Transverse colon (tissue), 4 donors: ENCODE measurements at regions of chr7 and their contacts with region 1.

Region 1: GRCh38 chr7:93690021-93690420 is 115.5 kb upstream of the CALCR start:
- DNase-seq: no peak
- H3K4me3 ChIP-seq: no peak overlapping the region
- H3K27ac ChIP-seq: no peak overlapping the region
- H3K4me1 ChIP-seq: no peaks in the 10 kb centered on the region
- H3K27me3 ChIP-seq: no peaks in the 10 kb centered on the region
- CTCF ChIP-seq: no peak
- EP300 ChIP-seq: no peak
- POLR2A ChIP-seq: no peak

Region 2: DNA sequence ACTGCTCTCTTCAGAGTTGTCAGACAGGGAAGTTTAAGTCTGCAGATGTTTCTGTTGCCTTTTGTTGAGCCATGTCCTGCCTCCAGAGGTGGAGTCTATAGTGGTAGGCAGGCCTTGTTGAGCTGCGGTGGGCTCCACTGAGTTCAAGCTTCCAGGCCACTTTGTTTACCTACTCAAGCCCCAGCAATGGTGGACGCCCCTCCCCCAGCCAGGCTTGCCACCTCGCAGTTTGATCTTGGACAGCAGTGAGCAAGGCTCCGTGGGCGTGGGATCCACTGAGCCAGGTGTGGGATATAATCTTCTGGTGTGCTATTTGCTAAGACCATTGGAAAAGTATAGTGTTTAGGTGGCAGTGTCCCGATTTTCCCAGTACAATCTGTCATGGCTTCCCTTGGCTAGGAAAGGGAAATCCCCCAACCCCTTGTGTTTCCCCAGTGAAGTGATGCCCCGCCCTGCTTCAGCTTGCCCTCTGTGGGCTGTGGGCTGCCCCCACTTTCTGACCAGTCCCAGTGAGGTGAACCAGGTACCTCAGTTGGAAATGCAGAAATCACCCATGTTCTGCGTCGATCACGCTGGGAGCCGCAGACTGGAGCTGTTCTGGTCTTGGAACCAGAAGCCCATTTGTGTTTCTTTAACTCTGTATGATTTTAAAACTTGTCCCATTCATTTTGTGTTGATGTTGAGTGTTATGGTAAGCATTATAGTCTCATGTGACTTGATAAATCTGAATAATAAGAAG is 26.3 kb before region 1 on chr7:
- in situ Hi-C with region 1: no loop called
- intact Hi-C with region 1: loop called (anchors 1 kb)
- DNase-seq: no peak
- H3K4me3 ChIP-seq: no peak overlapping the region
- H3K27ac ChIP-seq: no peak overlapping the region
- H3K4me1 ChIP-seq: no peaks in the 10 kb centered on the region
- H3K27me3 ChIP-seq: no peaks in the 10 kb centered on the region
- CTCF ChIP-seq: no peak
- EP300 ChIP-seq: no peak
- POLR2A ChIP-seq: no peak